ENCODE measurements at regions of chr19 and their contacts with region 1.

Region 1: DNA sequence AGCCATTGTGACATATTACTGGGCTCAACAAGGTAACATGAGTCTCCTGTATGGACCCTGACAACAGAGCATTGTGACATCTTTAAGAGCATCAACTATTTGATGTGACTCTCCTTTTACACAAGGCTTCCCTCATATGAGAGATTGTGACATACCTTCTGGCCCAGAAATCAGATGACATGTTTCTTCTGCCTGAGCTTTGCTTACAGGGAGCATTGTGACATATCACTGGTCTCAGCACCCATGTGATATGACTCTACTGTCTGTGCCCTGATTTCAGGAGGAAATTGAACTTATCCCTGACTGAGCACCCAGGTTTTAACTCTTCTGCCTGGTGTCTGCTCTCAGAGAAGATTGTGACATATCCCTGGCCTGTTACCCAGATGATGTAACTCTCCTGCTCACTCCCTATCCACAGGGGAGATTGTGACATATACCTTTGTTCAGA is 15.9 kb upstream of the ZNF681 start:
- DNase-seq: peak; percentile 25 to 50
- H3K4me3 ChIP-seq: no peak overlapping the region
- CTCF ChIP-seq: no peak
- POLR2A ChIP-seq: no peak

Region 2: GRCh38 chr19:24062190-24062589 is 287.6 kb after region 1 on chr19:
- intact Hi-C with region 1: loop called (anchors 10 kb)
- DNase-seq: peak in 1 of 2 donors; percentile 2
- H3K4me3 ChIP-seq: no peak overlapping the region
- CTCF ChIP-seq: no peak
- POLR2A ChIP-seq: no peak

Measured in lower leg skin (tissue), 4 donors.